Activated T-helper 1 cell treated with anti-CD3 and anti-CD28 coated beads, Interleukin-12 subunit alpha, Interleukin-12 subunit beta, Interleukin-2, Interleukin-4 antibody, amounts not matched to agents 30 ng/mL and 10 ng/mL and 1 ng/mL, durations not matched to agents 14 hours and 24 hours and 36 hours (primary cell): ENCODE measurements at regions of chr6 and their contacts with region 1.

Region 1: DNA sequence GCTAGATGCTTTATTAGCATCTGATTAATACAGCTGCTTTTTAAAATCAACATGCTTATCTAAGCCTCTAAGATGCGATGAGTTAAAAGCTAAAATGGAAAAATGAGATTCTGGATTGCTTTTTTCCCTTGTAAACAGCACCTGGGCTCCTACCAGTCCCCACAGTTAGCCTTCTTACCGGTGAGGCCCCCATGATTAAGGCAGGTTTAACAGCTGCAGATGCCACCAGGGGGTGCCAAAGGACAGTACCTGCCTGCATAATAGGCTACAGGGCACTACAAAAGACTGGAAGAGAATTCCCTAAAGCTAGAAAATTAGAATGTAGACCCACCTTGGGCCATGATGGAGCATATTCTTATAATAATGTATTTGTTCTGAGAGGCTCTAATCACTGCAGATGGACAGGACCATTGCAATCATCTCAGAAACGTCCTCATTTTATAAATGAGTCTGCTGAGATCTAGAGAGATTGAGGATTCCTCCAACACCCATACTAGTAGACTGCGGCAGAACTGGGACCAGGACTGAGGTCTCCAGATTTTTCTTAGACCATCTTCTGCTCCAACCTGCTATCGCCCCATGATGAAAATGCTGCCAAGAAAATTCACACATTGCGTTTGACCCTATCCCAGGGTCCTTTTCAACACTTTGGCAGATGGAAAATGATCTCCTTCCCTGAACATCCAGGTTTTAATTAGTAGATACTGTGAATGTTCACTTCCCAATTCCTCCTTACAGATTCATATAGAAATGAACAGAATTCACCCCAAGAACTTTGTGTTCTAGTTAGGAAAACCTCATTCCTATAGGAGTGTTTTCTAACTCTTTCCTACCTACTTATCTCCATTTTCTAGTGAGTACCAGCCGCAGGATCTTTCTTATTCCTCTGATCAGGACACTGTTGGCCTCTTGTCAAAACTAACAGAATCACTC is 148.8 kb downstream of the RPS12 start:
- DNase-seq: peak; percentile 36
- H3K4me3 Mint-ChIP-seq: no peak overlapping the region
- H3K27ac Mint-ChIP-seq: no peak overlapping the region
- H3K4me1 Mint-ChIP-seq: peaks cover 23% of the 10 kb centered on the region
- H3K27me3 Mint-ChIP-seq: peaks cover 13% of the 10 kb centered on the region

Region 2: GRCh38 chr6:132530293-132530974 is 432.8 kb before region 1 on chr6:
- intact Hi-C with region 1: loop called (anchors 5 kb)
- DNase-seq: peak; percentile 45
- H3K4me3 Mint-ChIP-seq: no peak overlapping the region
- H3K27ac Mint-ChIP-seq: no peak overlapping the region
- H3K4me1 Mint-ChIP-seq: no peaks in the 10 kb centered on the region
- H3K27me3 Mint-ChIP-seq: peaks cover 29% of the 10 kb centered on the region

Region 3: GRCh38 chr6:132669690-132670291 is 293.4 kb before region 1 on chr6:
- intact Hi-C with region 1: loop called (anchors 2 kb)
- DNase-seq: no peak
- H3K4me3 Mint-ChIP-seq: no peak overlapping the region
- H3K27ac Mint-ChIP-seq: no peak overlapping the region
- H3K4me1 Mint-ChIP-seq: peaks cover 7% of the 10 kb centered on the region
- H3K27me3 Mint-ChIP-seq: peaks cover 5% of the 10 kb centered on the region

Region 4: GRCh38 chr6:132820629-132821381 is 142.4 kb before region 1 on chr6:
- intact Hi-C with region 1: loop called (anchors 2 kb)
- DNase-seq: no peak
- H3K4me3 Mint-ChIP-seq: no peak overlapping the region
- H3K27ac Mint-ChIP-seq: no peak overlapping the region
- H3K4me1 Mint-ChIP-seq: peaks cover 44% of the 10 kb centered on the region
- H3K27me3 Mint-ChIP-seq: peaks cover 3% of the 10 kb centered on the region

Region 5: DNA sequence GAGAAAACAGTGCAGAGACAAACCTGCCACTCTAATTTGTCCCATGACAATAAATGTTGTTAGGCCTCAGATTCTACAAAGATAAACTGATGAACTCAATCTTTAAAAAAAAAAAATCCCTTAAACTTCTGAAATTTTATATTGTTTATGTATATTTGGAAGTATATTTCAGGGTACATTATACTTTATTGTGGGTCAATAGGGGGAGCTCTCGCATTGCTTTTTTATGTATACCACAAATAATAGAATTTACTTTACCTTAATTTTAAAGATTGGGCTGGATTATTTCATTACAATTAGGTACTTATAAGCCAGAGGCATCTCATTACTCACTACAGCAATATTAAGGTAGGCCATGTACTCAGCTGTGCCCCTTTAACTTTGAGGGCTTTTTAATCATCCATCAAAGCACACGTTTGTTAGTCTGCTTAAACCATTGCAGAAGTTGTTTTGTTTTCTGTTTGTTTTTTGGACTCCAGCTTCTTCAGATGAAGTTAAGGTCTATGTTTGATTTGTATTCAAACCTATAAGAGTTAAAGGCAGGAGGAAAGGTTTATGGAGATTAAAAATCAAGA is 221.7 kb after region 1 on chr6:
- intact Hi-C with region 1: loop called (anchors 5 kb)
- DNase-seq: no peak
- H3K4me3 Mint-ChIP-seq: no peak overlapping the region
- H3K27ac Mint-ChIP-seq: no peak overlapping the region
- H3K4me1 Mint-ChIP-seq: no peaks in the 10 kb centered on the region
- H3K27me3 Mint-ChIP-seq: peaks cover 1% of the 10 kb centered on the region

Region 6: DNA sequence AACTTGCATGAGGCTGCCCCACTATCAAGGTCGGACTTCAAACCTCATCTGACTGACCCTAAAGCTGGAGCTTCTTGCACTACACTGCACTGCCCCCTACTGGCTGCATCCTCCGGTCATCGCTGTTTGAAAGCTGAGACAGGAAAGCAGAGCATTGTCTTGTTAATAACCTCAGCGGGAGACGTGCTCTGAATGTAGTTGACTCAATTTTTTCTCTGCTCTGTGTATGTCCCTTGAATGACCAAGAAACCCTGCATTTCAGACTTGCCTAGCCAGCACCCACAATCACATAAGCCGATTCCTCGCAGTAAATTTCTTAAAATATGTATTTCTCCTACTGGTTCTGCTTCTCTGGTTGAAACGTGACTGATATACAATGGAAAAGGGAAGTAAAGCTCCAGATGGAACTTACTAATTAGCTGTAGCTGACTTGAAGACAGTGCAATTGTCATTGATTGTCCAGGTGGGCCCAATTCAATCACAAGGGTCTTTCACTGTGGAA is 953.5 kb after region 1 on chr6:
- intact Hi-C with region 1: loop called (anchors 10 kb)
- DNase-seq: peak; percentile 56
- H3K4me3 Mint-ChIP-seq: no peak overlapping the region
- H3K27ac Mint-ChIP-seq: no peak overlapping the region
- H3K4me1 Mint-ChIP-seq: no peaks in the 10 kb centered on the region
- H3K27me3 Mint-ChIP-seq: peaks cover 29% of the 10 kb centered on the region

Region 7: DNA sequence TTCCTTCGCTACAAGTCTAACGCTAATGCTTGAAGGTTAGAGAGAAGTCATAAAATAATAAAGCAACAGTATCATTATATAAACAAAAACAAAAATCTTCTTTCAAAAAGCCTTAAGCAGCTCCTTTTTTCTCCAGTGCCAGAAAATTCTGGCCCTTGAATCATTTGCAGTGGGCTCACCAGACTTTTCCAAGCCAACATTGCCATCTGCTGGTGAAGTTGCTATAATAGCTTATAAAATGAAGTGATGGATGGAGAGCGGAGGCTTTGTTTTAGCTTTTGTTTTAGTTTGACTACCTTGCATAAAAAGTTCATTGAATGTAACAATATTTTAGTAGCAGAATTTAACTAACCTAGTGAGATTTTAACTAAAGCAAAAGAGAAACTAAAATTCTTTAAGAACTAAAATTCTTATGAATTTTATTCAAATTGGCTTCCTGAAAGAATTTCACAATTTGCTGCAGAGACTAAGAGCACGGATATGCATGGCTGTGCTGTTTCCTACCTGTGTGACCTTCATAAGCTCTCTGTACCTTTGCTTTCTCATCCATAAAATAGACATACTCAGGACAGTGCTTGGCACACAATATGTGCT is 1134.0 kb after region 1 on chr6:
- intact Hi-C with region 1: loop called (anchors 10 kb)
- DNase-seq: peak; percentile 38
- H3K4me3 Mint-ChIP-seq: no peak overlapping the region
- H3K27ac Mint-ChIP-seq: no peak overlapping the region
- H3K4me1 Mint-ChIP-seq: peaks cover 6% of the 10 kb centered on the region
- H3K27me3 Mint-ChIP-seq: peaks cover 22% of the 10 kb centered on the region